ENCODE measurements at regions of chr1 and their contacts with region 1.

Region 1: GRCh38 chr1:26111530-26112406 is at the start of gene PDIK1L:
- DNase-seq: peak; percentile 97
- ATAC-seq: peak; percentile 85
- H3K4me3 Mint-ChIP-seq: peak within 1 kb of the TSS; percentile 96
- H3K27ac Mint-ChIP-seq: peak within 1 kb of the TSS; percentile 91
- H3K4me1 Mint-ChIP-seq: peaks cover 27% of the 10 kb centered on the region
- H3K27me3 Mint-ChIP-seq: no peaks in the 10 kb centered on the region
- total RNA-seq, gene PDIK1L: 12.3 to 13.0 TPM

Region 2: GRCh38 chr1:25905680-25906643 is 205.8 kb before region 1 on chr1 and contains the start of gene STMN1:
- CTCF ChIA-PET with region 1: no interaction called
- POLR2A ChIA-PET with region 1: no interaction called
- intact Hi-C with region 1: loop called in 1 of 2 experiments (anchors 1 kb)
- DNase-seq: peak; percentile 96
- ATAC-seq: peak; percentile 81
- H3K4me3 Mint-ChIP-seq: peak within 1 kb of the TSS; percentile 84
- H3K27ac Mint-ChIP-seq: peak within 1 kb of the TSS; percentile 83
- H3K4me1 Mint-ChIP-seq: peaks cover 25% of the 10 kb centered on the region
- H3K27me3 Mint-ChIP-seq: no peaks in the 10 kb centered on the region
- total RNA-seq, gene STMN1: 557 to 771 TPM

Region 3: GRCh38 chr1:26016388-26017188 is 95.2 kb before region 1 on chr1:
- CTCF ChIA-PET with region 1: no interaction called
- POLR2A ChIA-PET with region 1: no interaction called
- intact Hi-C with region 1: no loop called
- DNase-seq: no peak
- ATAC-seq: peak; percentile 16
- H3K4me3 Mint-ChIP-seq: no peak overlapping the region
- H3K27ac Mint-ChIP-seq: no peak overlapping the region
- H3K4me1 Mint-ChIP-seq: peaks cover 10% of the 10 kb centered on the region
- H3K27me3 Mint-ChIP-seq: no peaks in the 10 kb centered on the region

Region 4: DNA sequence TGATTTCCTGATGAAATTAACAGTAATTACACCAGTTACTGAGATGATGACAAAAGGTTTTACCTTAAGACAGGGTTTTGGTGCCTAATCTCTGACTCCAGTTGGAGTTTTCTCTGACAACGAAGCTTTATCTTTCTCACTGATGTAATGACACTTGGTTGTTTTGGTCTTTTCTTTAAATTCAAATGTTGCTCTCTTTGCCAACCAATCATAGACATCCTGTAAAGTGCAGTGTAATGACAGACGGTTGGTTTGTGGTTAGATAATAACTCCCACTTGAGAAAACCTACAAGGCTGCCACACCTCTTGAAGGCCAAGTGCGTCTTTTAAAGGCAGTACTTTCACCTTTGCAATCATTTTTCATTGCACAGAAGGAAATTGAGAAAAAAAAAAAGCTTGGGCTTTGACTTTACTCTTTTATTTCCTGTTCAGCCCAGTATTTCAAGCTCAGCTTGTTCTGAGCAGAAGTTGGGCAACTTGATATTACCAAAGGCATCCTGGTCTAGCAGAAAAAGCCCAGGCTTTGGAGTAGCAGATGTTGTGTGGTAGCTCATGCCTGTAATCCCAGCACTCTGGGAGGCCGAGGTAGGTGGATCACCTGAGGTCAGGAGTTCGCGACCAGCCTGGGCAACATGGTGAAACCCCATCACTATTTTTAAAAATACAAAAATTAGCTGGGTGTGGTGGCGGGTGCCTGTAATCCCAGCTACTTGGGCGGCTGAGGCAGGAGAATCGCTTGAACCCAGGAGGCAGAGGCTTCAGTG is 14.7 kb after region 1 on chr1:
- CTCF ChIA-PET with region 1: interaction called, 8 read pairs
- POLR2A ChIA-PET with region 1: interaction called, 6 read pairs
- intact Hi-C with region 1: loop called (anchors 1 kb)
- DNase-seq: peak; percentile 52
- ATAC-seq: peak; percentile 88
- H3K4me3 Mint-ChIP-seq: peak overlapping the region; percentile 58
- H3K27ac Mint-ChIP-seq: peak overlapping the region; percentile 86
- H3K4me1 Mint-ChIP-seq: peaks cover 51% of the 10 kb centered on the region
- H3K27me3 Mint-ChIP-seq: no peaks in the 10 kb centered on the region

Region 5: DNA sequence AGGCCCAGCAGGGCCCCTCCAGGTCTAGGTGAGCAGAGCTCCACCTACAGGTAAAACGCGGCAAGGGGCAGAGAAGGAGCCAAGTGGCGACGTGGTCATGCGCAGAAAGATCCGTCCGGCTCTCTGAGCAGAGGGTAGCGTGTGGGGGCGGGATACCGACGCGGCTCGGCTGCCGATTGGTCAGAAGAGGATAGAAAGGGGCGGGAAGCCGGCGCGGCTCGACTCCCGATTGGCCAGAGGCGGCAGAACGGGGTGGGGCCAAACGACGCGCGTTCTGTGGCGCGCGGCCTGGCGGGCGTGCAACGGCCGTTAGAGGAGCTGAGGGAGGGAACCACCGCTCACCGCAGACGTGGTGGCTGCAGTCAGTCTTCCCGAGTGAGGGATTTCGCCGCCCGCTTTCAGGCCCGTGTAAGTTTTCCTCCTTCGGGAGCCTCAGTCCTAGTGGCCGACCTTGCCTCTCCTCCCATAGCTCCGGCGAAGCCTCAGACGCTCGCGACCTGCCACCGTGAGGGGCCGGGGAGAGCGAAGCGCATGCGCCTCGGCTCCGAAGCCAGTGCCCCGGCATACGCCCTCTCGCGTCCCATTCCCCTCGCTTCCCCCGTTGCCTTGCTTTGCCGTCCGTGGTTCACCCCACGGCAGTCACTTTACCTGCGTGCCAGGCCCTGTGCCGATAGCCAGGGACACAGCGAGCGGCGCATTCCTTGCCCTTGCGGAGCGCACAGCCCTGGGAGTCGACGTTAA is 122.3 kb after region 1 on chr1 and contains the start of gene CEP85:
- CTCF ChIA-PET with region 1: interaction called, 3 read pairs
- POLR2A ChIA-PET with region 1: no interaction called
- intact Hi-C with region 1: loop called (anchors 1 to 5 kb)
- DNase-seq: peak; percentile 99
- ATAC-seq: peak; percentile 95
- H3K4me3 Mint-ChIP-seq: peak within 1 kb of the TSS; percentile 99
- H3K27ac Mint-ChIP-seq: peak within 1 kb of the TSS; percentile 96
- H3K4me1 Mint-ChIP-seq: peaks cover 32% of the 10 kb centered on the region
- H3K27me3 Mint-ChIP-seq: no peaks in the 10 kb centered on the region
- total RNA-seq, gene CEP85: 31.1 to 31.9 TPM

Region 6: DNA sequence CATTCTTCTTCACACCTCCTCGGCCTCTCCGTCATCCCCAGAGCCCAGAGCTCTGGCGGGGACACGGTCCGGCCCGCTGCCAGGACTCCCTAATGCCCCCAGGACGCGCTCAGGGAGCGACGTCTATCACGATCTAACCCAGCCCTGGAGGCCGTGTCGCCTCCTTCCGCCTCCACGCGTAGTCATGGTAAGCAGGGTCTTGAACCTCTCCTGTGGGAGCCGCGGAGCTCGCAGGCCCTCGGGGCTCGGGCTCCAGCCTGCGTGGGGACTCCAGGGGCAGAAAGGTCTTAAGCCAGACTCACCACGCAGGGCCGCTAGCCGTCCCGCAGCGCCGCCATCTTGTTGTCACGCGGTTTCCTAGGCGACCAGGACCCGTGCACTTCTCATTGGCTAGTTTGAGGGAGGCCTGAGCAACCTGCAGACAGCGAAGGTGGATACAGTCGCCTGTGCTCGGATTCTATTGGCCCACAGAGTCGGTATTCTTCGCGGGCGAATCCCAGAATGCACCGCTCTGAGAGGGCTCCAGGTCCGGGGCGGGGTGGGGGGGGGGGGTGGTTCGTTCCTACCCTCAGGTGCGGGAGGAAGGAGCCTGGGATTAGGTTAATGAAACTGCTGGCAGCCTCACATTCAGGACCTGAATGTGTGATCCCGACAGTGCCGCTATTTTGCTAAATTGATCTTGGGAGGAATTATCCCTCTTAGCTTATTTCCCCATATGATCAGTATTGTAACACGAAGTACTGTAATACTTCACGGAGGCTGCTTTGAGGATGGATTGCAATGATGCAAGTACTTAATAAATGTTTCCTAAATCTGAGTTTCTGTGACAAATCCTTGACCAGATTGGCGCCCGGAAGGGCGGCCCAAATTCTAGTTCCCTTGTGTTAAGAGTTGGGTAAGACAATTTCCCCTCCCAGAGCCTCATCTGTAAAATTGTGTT is 194.8 kb after region 1 on chr1 and contains the start of gene UBXN11:
- CTCF ChIA-PET with region 1: no interaction called
- POLR2A ChIA-PET with region 1: no interaction called
- intact Hi-C with region 1: loop called in 1 of 2 experiments (anchors 1 kb)
- DNase-seq: peak; percentile 96
- ATAC-seq: peak; percentile 94
- H3K4me3 Mint-ChIP-seq: peak within 1 kb of the TSS; percentile 90
- H3K27ac Mint-ChIP-seq: peak within 1 kb of the TSS; percentile 95
- H3K4me1 Mint-ChIP-seq: peaks cover 32% of the 10 kb centered on the region
- H3K27me3 Mint-ChIP-seq: no peaks in the 10 kb centered on the region
- total RNA-seq, gene UBXN11: 19.4 to 22.2 TPM

Region 7: GRCh38 chr1:26404631-26405030 is 292.9 kb after region 1 on chr1:
- CTCF ChIA-PET with region 1: no interaction called
- POLR2A ChIA-PET with region 1: no interaction called
- intact Hi-C with region 1: no loop called
- DNase-seq: no peak
- ATAC-seq: no peak
- H3K4me3 Mint-ChIP-seq: no peak overlapping the region
- H3K27ac Mint-ChIP-seq: no peak overlapping the region
- H3K4me1 Mint-ChIP-seq: peaks cover 13% of the 10 kb centered on the region
- H3K27me3 Mint-ChIP-seq: peaks cover 22% of the 10 kb centered on the region

Region 8: DNA sequence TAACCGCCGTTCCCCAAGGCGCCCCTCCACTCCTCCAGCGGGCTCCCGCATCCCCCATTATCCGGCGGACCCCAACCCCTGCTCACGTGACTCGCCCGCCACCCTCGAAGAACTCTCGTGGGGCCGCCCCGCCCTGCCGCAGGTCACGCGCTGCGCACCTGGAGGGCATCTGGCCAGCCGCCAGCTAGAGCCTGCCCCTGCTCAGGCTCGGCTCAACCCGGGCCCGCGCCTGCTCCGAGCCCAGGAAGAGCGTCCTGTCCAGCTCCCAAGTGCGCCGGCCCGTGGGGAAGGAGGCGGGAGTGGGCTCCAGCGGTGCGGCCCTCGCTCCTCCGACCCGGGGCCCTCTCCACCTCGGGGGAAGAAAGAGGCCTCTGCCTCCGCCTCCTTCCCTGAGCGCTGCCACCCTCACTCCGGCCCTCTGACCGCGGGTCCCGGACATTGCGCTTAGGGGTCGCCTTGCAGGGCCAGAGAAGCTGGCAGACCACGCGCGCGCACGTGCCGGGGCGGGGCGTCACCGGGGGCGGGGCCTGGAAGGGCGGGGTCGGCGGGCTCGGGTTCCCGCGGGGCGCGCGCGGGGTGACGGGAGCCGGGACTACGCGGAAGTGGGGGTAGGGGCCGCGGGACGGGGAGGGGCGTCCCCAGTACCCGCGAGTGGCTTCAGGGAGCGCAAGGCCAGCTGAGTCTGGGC is 388.9 kb after region 1 on chr1:
- CTCF ChIA-PET with region 1: no interaction called
- POLR2A ChIA-PET with region 1: no interaction called
- intact Hi-C with region 1: loop called in 1 of 2 experiments (anchors 1 kb)
- DNase-seq: peak; percentile 95
- ATAC-seq: peak; percentile 77
- H3K4me3 Mint-ChIP-seq: peak overlapping the region; percentile 88
- H3K27ac Mint-ChIP-seq: peak overlapping the region; percentile 94
- H3K4me1 Mint-ChIP-seq: peaks cover 16% of the 10 kb centered on the region
- H3K27me3 Mint-ChIP-seq: no peaks in the 10 kb centered on the region